GM12878 (cell line): ENCODE measurements at regions of chr7 and their contacts with region 1.

Region 1: DNA sequence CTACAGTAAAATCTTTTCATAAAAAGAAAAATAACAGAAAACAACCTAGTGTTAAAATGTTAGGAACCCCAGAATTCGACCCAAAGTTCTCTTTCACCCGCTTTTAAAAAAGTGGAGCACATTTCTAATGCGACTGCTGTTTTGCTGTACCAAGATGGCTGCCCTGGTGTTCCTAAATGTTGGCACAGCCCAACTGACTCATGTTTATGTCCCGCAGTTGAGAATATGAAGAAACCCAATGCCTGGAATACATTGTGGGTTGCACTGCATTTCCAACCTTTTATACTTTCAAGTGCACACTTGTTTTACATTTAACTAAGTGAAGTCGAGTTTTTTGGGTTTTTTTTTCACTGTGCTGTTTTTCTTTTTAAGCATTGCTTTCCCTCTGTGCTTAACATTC is 944 bp downstream of the STEAP1B start:
- DNase-seq: no peak
- ATAC-seq: no peak
- H3K4me3 ChIP-seq: no peak overlapping the region
- H3K27ac ChIP-seq: no peak overlapping the region
- H3K4me1 ChIP-seq: no peaks in the 10 kb centered on the region
- H3K27me3 ChIP-seq: no peaks in the 10 kb centered on the region
- CTCF ChIP-seq: no peak
- EP300 ChIP-seq: no peak
- POLR2A ChIP-seq: no peak
- RAD21 ChIP-seq: no peak

Region 2: GRCh38 chr7:22103255-22103969 is 395.6 kb before region 1 on chr7:
- CTCF ChIA-PET with region 1: interaction called, 5 read pairs
- POLR2A ChIA-PET with region 1: no interaction called
- RAD21 ChIA-PET with region 1: no interaction called
- SMC1A ChIA-PET with region 1: interaction called, 5 read pairs
- in situ Hi-C with region 1: no loop called
- intact Hi-C with region 1: loop called (anchors 1 kb)
- DNase-seq: peak; percentile 25
- ATAC-seq: peak; percentile 98
- H3K4me3 ChIP-seq: no peak overlapping the region
- H3K27ac ChIP-seq: no peak overlapping the region
- H3K4me1 ChIP-seq: no peaks in the 10 kb centered on the region
- H3K27me3 ChIP-seq: peaks cover 0 to 2% of the 10 kb centered on the region in 2 experiments; a peak in 1 of 4 replicates
- CTCF ChIP-seq: peak; percentile 70 to 73 (median 72)
- EP300 ChIP-seq: no peak
- POLR2A ChIP-seq: no peak
- RAD21 ChIP-seq: peak; percentile 78